Activated CD8-positive, alpha-beta T cell treated with anti-CD3 and anti-CD28 coated beads for 36 hours (primary cell): ENCODE measurements at regions of chr14 and their contacts with region 1.

Region 1: GRCh38 chr14:50321009-50321660 is 9.0 kb downstream of the DMAC2L start:
- DNase-seq: peak; percentile 78
- ATAC-seq: peak; percentile 98
- H3K4me3 Mint-ChIP-seq: no peak overlapping the region
- H3K27ac Mint-ChIP-seq: no peak overlapping the region
- H3K4me1 Mint-ChIP-seq: peaks cover 29% of the 10 kb centered on the region
- H3K27me3 Mint-ChIP-seq: no peaks in the 10 kb centered on the region
- CTCF ChIP-seq: peak; percentile 75

Region 2: DNA sequence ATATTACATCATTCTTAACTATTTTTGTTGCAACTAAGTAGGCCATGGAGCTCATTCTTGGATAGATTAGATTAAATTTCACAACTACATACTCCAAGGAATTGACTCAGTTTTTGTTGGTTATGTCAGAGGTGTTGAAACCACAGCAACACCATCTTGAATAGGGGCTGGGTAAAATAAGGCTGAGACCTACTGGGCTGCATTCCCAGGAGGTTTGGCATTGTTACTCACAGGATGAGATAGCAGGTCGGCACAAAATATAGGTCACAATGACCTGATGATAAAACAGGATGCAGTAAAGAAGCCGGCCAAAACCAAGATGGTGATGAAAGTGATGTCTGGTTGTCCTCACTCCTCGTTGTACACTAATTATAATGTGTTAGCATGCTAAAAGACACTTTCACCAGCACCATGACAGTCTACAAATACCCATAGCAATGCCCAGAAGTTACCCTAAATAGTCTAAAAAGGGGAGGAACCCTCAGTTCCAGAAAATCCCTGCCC is 11.9 kb after region 1 on chr14:
- CTCF ChIA-PET with region 1: interaction called, 15 read pairs
- POLR2A ChIA-PET with region 1: no interaction called
- intact Hi-C with region 1: no loop called
- DNase-seq: no peak
- ATAC-seq: no peak
- H3K4me3 Mint-ChIP-seq: no peak overlapping the region
- H3K27ac Mint-ChIP-seq: no peak overlapping the region
- H3K4me1 Mint-ChIP-seq: peaks cover 15% of the 10 kb centered on the region
- H3K27me3 Mint-ChIP-seq: no peaks in the 10 kb centered on the region
- CTCF ChIP-seq: no peak

Region 3: DNA sequence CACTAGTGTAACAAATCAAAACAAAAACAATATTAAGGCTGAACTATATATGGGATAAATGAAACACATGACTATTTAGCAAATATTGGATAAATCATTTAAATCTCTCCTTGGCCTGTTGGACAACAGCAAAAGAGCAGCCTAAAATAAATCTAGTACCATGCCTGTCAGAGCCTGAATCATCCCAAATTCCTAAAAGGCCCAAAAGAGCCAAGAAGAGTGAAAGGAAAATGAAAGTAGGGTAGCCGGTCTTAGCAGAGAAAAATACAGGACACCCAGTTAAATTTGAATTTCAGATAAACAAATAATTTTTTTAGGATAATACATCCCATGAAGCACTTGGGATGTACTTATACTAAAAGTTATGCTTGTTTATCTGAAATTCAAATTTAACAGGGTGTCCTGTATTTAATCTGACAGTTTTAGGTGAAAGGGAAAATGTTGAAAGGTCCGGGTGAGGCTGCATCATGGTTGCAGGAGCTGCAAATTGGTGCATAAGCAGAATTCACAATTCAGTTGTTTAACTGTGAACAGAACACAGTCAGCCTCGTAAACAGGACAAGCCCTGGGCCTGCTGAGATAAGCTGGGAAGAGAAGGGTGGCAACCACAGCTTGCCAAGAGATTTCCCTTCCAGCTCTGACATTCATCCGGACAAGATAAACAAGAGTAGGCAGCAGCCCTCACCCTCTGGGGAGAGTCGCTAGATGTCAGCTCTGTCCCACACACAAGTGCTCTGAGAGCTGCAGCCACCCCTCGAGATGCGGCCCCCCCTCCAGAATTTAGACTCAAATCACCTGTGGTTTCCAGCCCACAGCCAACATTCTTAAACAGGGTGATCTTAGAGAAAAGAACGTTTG is 21.3 kb after region 1 on chr14:
- CTCF ChIA-PET with region 1: interaction called, 15 read pairs
- POLR2A ChIA-PET with region 1: no interaction called
- intact Hi-C with region 1: no loop called
- DNase-seq: peak; percentile 79
- ATAC-seq: peak; percentile 29
- H3K4me3 Mint-ChIP-seq: no peak overlapping the region
- H3K27ac Mint-ChIP-seq: no peak overlapping the region
- H3K4me1 Mint-ChIP-seq: peaks cover 26% of the 10 kb centered on the region
- H3K27me3 Mint-ChIP-seq: no peaks in the 10 kb centered on the region
- CTCF ChIP-seq: peak; percentile 29

Region 4: DNA sequence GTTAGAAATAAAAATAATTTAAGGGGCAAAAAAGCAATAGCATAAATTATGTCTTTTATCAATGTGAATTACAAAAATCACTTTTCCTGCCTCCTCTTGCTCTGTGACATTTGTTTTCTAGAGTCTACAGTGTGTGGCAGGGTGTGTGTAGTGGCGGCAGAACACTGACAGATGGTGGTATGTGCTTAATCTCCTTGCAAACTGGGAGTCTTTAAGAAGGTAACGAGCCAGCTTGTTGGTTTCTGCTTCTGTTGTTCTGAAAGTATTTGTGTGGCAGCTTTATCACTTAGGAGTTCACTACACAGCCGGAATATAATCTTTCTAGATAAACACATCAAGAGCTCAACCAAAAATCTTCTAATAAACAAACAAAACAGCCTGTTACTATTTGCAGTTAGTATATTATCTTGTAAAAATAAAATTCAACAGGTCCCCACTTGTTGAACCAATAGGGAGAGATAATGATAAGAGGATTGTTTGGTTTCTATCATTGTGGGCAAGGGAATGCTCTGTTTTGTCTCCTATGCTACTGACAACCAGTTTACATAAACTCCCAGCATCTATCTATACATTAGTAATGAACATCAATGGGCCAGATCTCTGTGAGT is 62.6 kb after region 1 on chr14:
- CTCF ChIA-PET with region 1: no interaction called
- POLR2A ChIA-PET with region 1: no interaction called
- intact Hi-C with region 1: no loop called
- DNase-seq: no peak
- ATAC-seq: no peak
- H3K4me3 Mint-ChIP-seq: no peak overlapping the region
- H3K27ac Mint-ChIP-seq: no peak overlapping the region
- H3K4me1 Mint-ChIP-seq: no peaks in the 10 kb centered on the region
- H3K27me3 Mint-ChIP-seq: no peaks in the 10 kb centered on the region
- CTCF ChIP-seq: no peak

Region 5: GRCh38 chr14:50396631-50397390 is 75.7 kb after region 1 on chr14 and contains the start of gene CDKL1:
- CTCF ChIA-PET with region 1: interaction called, 14 read pairs
- POLR2A ChIA-PET with region 1: no interaction called
- intact Hi-C with region 1: no loop called
- DNase-seq: peak; percentile 53
- ATAC-seq: peak; percentile 74
- H3K4me3 Mint-ChIP-seq: peak within 1 kb of the TSS; percentile 80
- H3K27ac Mint-ChIP-seq: peak within 1 kb of the TSS; percentile 74
- H3K4me1 Mint-ChIP-seq: peaks cover 10% of the 10 kb centered on the region
- H3K27me3 Mint-ChIP-seq: peaks cover 5% of the 10 kb centered on the region
- CTCF ChIP-seq: no peak
- total RNA-seq, gene CDKL1: 3.3 to 7.7 TPM

Region 6: GRCh38 chr14:50520947-50521815 is 200.0 kb after region 1 on chr14:
- CTCF ChIA-PET with region 1: interaction called, 13 read pairs
- POLR2A ChIA-PET with region 1: interaction called, 3 read pairs
- intact Hi-C with region 1: no loop called
- DNase-seq: peak; percentile 87
- ATAC-seq: peak; percentile 78
- H3K4me3 Mint-ChIP-seq: peak overlapping the region; percentile 64
- H3K27ac Mint-ChIP-seq: peak overlapping the region; percentile 92
- H3K4me1 Mint-ChIP-seq: peaks cover 50% of the 10 kb centered on the region
- H3K27me3 Mint-ChIP-seq: no peaks in the 10 kb centered on the region
- CTCF ChIP-seq: no peak

Region 7: DNA sequence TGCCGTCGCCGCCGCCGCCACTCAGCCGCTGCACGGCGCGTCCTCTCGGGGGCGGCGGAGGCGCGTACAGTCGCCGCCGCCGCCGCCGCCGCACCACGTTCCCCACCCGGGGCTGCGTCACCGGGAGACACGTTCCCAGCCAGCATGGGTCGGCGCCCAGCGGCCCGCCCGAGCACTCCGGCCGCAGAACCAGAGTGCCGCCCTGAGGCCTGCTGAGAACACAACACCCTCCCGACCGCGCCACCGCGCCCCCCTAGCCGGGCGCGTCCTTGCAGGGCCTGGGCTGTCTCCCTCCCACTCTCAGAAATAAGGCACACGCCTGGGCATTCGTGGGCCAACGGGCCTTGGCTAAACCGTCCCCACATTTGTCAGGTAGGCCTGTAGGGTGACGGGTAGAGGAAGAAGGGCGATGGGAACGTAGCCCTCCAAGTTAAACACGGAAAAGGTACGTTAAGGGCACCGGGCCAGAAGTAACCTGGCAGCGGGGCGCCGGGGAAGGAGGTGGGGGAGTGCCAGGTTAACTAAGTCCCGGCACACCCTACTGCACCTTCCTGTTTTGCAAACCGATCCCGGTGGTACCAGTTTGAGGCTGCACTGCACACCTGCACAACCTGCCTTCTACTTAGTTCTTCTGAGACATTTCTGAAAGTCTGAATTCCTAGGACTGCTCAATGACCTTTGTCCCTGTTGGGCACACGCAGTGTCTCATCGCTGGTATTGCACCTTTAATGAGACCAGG is 211.5 kb after region 1 on chr14 and contains the start of gene MAP4K5:
- CTCF ChIA-PET with region 1: interaction called, 12 read pairs
- POLR2A ChIA-PET with region 1: interaction called, 3 read pairs
- intact Hi-C with region 1: loop called (anchors 2 kb)
- DNase-seq: peak; percentile 92
- ATAC-seq: peak; percentile 97
- H3K4me3 Mint-ChIP-seq: peak within 1 kb of the TSS; percentile 93
- H3K27ac Mint-ChIP-seq: peak within 1 kb of the TSS; percentile 89
- H3K4me1 Mint-ChIP-seq: peaks cover 38% of the 10 kb centered on the region
- H3K27me3 Mint-ChIP-seq: no peaks in the 10 kb centered on the region
- CTCF ChIP-seq: peak; percentile 90
- total RNA-seq, gene MAP4K5: 26.2 to 28.1 TPM